ENCODE measurements at regions of chr14 and their contacts with region 1.

Region 1: DNA sequence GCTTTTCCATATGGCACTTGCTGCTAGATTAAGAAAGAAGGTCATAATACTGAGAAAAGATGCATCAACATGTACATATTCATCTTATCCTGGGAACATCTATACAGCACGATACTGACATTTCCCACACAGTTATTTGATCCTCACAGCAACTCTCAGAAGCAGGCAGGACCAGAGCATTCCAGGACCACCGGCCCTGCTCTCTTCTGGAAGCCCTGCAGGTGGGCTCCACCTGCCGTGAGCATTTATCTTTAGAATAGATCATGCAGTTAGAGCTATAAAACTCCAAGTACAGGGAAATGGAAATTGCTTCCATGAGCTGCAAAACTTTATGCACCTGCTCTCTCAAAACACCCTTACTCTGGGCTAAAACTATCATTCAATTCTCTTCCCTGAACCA is 5.5 kb upstream of the BDKRB1 start:
- DNase-seq: no peak
- H3K4me3 ChIP-seq: no peak overlapping the region
- H3K27ac ChIP-seq: no peak overlapping the region
- H3K4me1 ChIP-seq: no peaks in the 10 kb centered on the region
- H3K27me3 ChIP-seq: peaks cover 0 to 9% (median 3%) of the 10 kb centered on the region in 5 experiments

Region 2: GRCh38 chr14:96067985-96068930 is 182.2 kb before region 1 on chr14:
- CTCF ChIA-PET with region 1: no interaction called
- POLR2A ChIA-PET with region 1: interaction called, 10 read pairs
- DNase-seq: no peak
- H3K4me3 ChIP-seq: no peak overlapping the region
- H3K27ac ChIP-seq: no peak overlapping the region
- H3K4me1 ChIP-seq: no peaks in the 10 kb centered on the region
- H3K27me3 ChIP-seq: peaks cover 0 to 16% (median 0%) of the 10 kb centered on the region in 5 experiments

Measured in common myeloid progenitor, CD34-positive (primary cell).